ENCODE measurements at regions of chr2 and their contacts with region 1.

Region 1: GRCh38 chr2:204108330-204108751 is 171.8 kb downstream of the ICOS start:
- DNase-seq: peak; percentile 20
- H3K4me3 Mint-ChIP-seq: peak overlapping the region; percentile 64
- H3K27ac Mint-ChIP-seq: peak overlapping the region; percentile 89
- H3K4me1 Mint-ChIP-seq: peaks cover 75% of the 10 kb centered on the region
- H3K27me3 Mint-ChIP-seq: no peaks in the 10 kb centered on the region

Region 2: DNA sequence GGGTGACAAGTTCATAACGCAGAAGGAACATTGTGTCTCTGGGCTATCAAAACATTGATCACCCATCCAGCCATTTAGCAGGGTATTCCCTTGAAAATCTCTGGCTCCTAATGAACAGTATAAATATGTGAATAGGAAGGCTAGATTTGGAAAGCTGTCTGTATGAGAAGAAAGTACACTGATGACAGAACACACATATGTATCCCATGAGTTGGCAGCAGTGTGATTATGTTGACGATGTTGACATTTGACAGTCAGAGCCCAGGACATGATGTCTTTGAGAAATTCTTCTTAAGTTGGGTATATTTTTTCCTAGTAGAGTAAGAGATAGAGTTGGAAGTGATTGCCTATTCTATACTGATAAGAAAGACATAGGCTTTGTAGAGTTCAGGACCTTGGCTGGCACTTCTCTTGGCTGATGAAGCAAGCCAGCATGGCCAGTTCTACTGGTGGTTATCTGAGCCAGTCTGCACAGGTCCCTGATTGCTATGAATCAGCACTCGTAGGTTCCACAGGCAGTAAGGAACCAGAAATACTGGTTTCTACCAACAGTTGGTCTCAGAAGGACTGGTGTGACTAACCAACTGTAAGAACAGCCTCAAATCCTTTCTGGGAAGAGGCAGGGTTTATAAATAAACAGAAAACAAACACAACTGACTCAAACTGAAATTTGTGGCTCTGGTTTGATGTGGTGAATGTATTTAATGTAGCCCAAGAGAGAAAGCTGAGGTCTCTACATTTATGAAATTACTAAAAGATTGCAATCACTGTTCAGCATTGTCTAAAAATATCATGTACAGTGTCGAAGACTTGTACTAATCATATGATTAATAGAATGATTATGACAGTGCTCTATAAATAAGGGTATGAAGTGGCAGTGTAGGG is 529.3 kb before region 1 on chr2:
- intact Hi-C with region 1: loop called (anchors 1 kb)
- DNase-seq: peak; percentile 54
- H3K4me3 Mint-ChIP-seq: no peak overlapping the region
- H3K27ac Mint-ChIP-seq: peak overlapping the region; percentile 67
- H3K4me1 Mint-ChIP-seq: peaks cover 38% of the 10 kb centered on the region
- H3K27me3 Mint-ChIP-seq: peaks cover 41% of the 10 kb centered on the region

Region 3: DNA sequence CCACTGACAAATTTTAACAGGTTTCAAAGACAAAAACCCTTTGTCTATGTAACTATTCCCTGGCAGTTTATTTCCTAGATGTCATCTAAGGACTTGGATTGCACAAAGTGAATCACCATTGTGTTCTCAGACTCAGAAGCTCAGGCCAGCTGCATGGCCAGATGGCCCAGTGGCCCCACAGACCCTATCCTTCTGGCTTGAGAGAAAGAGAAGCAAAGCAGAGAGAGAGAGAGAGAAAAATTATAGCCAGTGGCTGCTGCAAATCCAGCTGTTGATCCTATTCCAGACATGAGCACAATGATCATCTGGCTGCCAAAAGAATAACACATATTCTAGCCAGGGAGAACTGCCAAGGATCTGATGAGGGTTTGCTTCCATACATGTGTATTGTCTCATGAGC is 214.9 kb before region 1 on chr2:
- intact Hi-C with region 1: loop called (anchors 5 kb)
- DNase-seq: no peak
- H3K4me3 Mint-ChIP-seq: no peak overlapping the region
- H3K27ac Mint-ChIP-seq: peak overlapping the region; percentile 92
- H3K4me1 Mint-ChIP-seq: peaks cover 79% of the 10 kb centered on the region
- H3K27me3 Mint-ChIP-seq: no peaks in the 10 kb centered on the region

Region 4: DNA sequence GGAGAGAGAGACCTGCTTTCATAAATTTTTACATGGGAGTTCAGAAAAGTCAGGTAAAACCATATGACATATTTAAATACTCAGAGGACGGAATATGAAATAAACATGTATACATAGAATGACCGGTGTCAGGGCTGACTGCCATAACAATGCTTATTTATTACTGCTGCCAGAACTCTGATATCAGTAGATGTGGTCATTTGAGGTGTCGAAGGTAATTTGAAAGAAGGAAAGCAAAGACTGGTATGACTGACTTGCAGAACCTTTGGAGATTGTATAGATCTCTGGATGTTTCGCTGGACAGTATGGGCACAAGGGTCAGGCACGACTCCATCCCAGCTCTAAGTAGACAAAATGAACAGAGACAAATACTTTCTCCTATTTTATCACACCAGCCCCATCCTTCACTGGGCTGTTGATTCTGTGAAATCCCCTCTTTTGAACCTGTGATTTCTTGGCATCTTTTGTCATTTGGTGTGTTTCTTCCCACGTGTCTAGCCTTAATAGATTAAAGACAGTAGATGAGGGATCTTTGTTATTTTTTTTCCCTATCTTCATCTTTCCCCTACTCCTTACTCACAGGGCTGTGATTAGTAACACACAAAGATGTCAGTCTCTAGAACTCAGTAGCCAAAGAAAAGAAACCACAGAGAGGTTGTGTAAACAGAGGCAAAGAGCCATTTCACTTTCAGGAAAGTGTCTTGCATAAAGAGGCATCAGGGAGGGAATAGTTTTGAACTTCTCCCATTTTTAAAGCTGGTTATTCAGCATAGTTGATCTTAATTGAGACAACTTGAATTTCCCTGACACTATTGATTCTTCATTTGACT is 110.1 kb before region 1 on chr2:
- intact Hi-C with region 1: loop called (anchors 1 kb)
- DNase-seq: no peak
- H3K4me3 Mint-ChIP-seq: peak overlapping the region; percentile 24
- H3K27ac Mint-ChIP-seq: peak overlapping the region; percentile 77
- H3K4me1 Mint-ChIP-seq: peaks cover 64% of the 10 kb centered on the region
- H3K27me3 Mint-ChIP-seq: no peaks in the 10 kb centered on the region

Region 5: DNA sequence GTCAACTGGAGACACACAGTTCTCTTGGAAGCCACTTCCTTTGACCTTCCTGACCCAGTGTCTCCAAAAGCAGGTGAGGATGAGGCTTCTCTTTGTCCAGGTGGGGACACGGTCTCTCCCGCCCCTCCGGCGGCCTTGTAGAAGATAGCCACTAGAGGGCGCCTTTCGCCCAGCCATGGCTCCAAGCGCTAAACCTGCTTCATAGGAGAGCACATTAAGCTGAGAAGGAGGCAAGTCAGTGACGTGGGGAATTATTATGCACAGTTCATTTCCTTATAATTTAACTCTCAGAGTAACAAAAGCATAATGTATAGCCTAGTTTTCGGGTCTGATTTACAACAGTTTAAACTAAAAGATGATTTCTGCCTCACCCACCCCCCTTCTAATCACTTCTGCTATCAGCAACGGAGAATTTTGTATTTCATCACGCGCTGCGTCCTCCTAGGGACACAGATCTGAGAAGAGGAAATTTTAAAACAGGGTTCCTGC is 37.0 kb after region 1 on chr2:
- intact Hi-C with region 1: loop called (anchors 1 kb)
- DNase-seq: peak; percentile 69
- H3K4me3 Mint-ChIP-seq: peak overlapping the region; percentile 76
- H3K27ac Mint-ChIP-seq: peak overlapping the region; percentile 75
- H3K4me1 Mint-ChIP-seq: peaks cover 19% of the 10 kb centered on the region
- H3K27me3 Mint-ChIP-seq: peaks cover 30% of the 10 kb centered on the region

Region 6: DNA sequence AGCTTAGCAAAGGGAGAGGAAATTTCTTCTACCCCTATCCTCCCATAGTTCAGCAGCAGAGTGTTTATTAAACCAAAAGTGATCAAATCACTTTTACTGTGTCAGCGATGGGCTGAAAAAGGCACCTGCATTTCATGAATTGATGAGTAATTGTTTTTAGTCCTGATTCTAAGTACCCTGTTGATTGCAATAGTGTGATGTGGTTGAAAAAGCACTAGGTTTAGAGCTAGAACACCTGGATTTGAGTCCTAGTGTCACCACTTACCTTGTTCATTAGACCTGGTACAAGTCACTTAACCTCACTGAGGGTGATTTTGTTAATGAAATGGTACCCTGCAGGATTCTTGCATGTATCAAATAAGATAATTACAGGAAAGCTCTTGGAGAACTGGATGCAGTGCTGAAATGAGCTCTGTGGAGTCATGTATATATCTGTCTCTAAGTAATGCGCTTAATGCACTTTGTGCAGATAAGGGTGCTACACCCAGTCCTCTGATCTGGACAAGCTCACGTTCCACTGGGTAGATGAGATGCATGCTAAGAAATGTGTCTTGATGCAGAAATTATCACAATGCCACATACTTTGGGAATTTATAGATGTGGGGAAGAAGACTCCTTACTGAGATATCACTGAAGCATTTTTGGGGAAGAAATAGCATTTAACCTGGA is 726.5 kb after region 1 on chr2:
- intact Hi-C with region 1: loop called (anchors 2 kb)
- DNase-seq: no peak
- H3K4me3 Mint-ChIP-seq: no peak overlapping the region
- H3K27ac Mint-ChIP-seq: no peak overlapping the region
- H3K4me1 Mint-ChIP-seq: peaks cover 2% of the 10 kb centered on the region
- H3K27me3 Mint-ChIP-seq: peaks cover 64% of the 10 kb centered on the region

Measured in activated T-helper 2 cell treated with anti-CD3 and anti-CD28 coated beads, Interferon-gamma antibody, Interleukin-2, Interleukin-4, amounts not matched to agents 10 μg/mL and 5 μg/mL and 100 μg/mL, durations not matched to agents 14 hours and 24 hours and 36 hours (primary cell).